ENCODE measurements at regions of chr6 and their contacts with region 1.

Region 1: DNA sequence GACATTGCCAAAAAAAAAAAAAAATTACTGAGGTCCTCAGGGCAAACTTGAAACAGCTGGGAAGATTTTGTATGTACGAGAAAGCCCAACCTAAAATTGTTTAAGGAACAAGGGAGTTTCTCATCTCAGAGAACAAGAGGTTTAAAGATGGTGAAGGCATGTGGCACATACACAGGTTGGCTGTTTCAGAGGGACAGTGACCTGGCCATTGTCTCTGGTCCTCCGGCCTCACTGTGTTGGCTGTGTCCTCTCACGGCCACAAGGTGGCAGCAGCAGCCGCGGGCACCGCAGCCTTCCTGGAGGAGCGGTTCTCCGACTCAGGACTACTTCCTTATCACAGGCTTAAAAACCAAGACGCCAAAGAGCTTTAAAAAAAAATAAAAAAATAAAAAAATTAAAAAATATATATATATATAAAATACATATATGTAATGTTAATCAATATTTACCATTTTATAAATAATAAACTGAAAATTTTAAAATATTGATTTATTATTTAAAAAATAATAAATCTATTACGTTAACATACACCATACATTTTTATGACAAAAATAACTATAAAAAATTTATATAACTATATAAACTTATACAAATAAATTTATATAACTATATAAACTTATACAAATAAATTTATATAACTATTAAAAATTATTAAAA is 52.8 kb downstream of the GTF2H5 start:
- DNase-seq: peak; percentile 83
- CTCF ChIP-seq: peak; percentile 99

Region 2: DNA sequence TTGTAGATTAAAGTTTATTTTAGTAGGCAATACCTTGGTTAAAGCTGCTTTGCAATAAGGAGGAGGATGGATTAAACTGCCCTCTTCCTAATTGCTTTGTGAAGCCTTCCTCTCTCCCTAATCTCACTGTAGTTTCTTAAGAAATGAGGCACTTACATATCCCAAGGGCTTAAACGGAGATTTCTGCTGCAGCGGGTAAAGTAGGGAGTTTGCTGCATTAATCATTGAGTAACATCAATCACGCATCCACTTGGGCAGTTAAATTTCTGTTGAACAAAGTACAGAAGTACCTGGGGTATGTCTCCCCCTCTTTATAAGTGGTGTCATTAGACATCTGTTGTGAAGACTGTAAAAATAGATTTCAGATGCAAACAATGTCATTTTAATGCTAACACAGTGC is 1473.2 kb before region 1 on chr6:
- in situ Hi-C with region 1: no loop called
- DNase-seq: no peak
- CTCF ChIP-seq: no peak

Region 3: DNA sequence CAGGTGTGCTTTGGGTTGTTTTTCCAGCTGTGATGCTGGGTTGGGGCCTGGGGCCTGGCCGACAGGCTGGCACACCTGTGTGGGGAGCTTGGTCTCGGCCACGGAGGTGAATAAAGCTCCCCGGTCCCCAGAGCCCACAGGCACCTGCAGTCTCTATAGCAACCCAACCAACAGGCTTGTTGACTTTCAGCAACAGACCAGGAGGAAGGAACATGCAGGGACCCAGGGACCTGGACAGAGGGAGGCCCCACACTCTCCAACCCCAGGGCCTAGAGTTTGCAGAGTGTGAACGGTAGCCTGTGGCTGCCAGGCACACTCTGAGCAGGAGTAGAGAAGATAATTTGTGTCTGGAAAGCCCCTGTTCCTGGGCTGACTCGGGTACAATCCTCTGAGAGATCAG is 253.9 kb before region 1 on chr6:
- in situ Hi-C with region 1: no loop called
- DNase-seq: no peak
- CTCF ChIP-seq: no peak

Region 4: GRCh38 chr6:158322724-158323560 is 102.0 kb after region 1 on chr6:
- in situ Hi-C with region 1: no loop called
- DNase-seq: peak; percentile 49
- CTCF ChIP-seq: no peak

Region 5: GRCh38 chr6:158519761-158520160 is 298.8 kb after region 1 on chr6:
- in situ Hi-C with region 1: loop called (anchors 10 kb)
- DNase-seq: no peak
- CTCF ChIP-seq: no peak

Measured in GM13977 (cell line).